Posterior vena cava (tissue), 2 donors: ENCODE measurements at regions of chr5 and their contacts with region 1.

Region 1: GRCh38 chr5:11400312-11400711 is 503.9 kb downstream of the CTNND2 start:
- DNase-seq: no peak

Region 2: DNA sequence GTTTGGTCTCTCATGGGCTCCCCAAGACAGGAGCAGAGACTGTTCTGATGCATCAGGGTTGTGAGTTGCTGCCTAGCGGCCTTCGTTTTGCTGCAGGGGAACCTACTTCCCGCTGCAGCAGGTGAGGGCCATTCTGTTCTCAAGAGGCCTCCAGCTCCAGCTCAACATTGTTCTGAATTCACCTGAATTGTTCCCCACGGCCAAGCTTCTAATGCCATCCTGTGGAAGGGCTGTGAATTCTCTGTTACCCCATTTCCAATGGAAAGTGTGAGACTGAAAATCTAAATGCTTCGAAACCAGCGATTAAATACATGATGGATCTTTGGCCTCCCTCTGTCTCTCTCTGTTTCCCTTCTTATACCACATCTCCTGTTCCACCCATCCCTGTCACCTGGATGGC is 290.2 kb before region 1 on chr5:
- intact Hi-C with region 1: no loop called
- DNase-seq: no peak

Region 3: GRCh38 chr5:11415751-11416150 is 15.4 kb after region 1 on chr5:
- intact Hi-C with region 1: loop called in 1 of 2 experiments (anchors 2 kb)
- DNase-seq: no peak